ENCODE measurements at regions of chr22 and their contacts with region 1.

Region 1: GRCh38 chr22:39532215-39533071 is at the start of gene RPS19BP1:
- DNase-seq: peak; percentile 96
- H3K4me3 ChIP-seq: peak within 1 kb of the TSS; percentile 96
- CTCF ChIP-seq: no peak

Region 2: DNA sequence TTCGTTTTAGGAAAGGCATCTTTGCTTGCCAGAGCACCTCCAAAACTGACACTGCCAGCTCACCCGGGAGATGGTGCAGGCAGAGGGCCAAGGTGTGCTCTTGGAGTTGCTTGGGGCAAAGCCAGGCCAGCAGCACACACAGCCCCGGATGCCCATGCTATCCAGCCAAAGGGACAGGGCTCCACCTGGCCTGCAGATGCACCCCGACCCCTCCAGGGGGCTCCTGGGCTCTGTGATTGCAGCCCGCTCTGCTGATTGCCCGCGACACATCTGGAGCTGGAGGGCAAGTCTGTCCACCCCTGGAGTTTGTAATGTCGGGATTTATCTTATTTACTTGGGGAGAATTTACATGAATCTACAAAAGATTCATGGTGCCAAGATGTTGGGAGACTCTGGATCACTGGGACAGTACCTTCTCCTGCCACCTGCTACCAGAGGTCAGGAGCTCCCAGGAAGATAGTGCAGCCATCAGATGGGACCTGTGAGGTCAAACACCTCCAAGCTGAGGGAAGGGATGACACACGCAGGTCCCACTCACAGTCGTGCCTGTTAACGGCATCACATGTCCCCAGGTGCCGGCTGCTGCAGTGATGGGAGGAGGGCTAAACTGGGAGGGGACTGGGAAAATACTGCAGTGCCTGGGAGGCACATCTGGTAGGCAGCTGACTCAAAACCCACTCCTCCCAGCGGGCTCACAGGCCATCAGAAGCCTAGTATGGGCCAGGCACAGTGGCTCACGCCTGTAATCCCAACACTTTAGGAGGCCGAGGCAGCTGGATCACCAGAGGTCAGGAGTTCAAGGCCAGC is 397.1 kb before region 1 on chr22:
- CTCF ChIA-PET with region 1: interaction called, 10 read pairs
- POLR2A ChIA-PET with region 1: no interaction called
- DNase-seq: no peak
- H3K4me3 ChIP-seq: no peak overlapping the region
- CTCF ChIP-seq: peak; percentile 82

Region 3: DNA sequence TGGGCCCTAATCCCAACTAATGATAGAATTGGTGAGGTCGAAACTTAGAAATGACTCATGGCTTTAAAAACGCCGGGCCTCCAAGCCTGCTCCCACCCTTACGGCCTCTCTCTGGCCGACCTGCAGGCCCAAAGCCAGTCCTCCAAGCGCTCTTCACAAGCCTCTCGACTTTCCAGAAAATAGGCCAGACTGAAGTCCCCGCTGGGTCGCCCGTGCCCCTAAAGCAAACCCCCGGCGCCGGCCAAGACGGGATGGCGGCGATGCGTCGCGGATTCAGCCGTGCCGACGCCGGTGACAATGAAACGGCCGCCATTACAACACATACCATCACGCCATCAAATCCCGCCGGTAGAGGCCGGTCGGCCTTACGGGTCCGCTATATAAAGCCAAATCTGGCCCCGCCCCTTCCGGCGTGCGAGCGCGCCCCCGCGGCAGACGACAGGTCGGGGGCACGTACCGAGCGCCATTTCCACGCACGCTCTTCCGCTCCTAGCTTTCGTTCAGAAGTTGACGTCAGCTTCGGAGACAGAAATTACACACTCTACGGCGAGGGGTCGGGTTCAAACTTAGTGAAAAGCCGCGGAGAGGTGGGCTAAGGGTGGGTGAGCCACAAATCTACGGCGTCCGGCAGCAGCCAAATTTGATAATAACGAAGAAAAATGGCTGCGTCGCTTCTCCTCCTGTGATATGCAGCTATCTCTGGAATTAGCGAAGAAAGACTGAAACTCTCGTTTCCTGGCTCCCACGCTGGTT is 213.0 kb before region 1 on chr22 and contains the start of gene RPL3:
- CTCF ChIA-PET with region 1: interaction called, 84 read pairs
- POLR2A ChIA-PET with region 1: interaction called, 59 read pairs
- DNase-seq: peak; percentile 91
- H3K4me3 ChIP-seq: peak within 1 kb of the TSS; percentile 89
- CTCF ChIP-seq: no peak

Region 4: DNA sequence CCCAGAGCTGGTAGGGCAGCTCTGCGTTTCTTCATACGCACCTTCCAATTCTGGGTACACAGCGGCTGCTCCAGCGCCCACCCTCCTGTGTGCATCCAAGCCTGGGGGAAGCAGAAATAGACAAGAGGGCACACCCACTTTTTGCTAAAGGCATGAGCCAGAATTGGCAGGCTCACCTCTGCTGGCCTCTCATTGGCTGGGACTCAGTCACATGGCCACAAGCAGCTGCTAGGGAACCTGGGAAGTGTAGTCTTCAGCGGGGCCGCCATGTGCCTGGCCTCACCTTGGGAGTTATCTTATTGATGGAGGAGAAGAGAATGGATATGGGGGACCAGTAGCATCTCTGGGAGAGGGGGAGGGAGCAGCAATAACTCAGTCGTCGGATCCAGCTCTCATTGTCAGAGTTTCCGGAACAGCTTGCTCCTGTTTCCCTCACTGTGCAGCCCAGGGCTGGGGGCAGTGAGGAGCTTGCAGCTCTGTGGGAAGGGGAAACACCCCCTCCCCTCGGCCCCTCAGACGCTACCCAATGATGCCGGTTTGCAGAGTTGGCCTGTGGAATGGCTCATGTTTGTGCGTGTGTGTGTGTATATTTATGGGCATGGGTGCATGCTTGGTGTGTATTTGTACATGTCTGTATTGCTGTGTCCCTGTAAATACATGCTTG is 42.2 kb before region 1 on chr22:
- CTCF ChIA-PET with region 1: interaction called, 222 read pairs
- POLR2A ChIA-PET with region 1: no interaction called
- DNase-seq: no peak
- H3K4me3 ChIP-seq: no peak overlapping the region
- CTCF ChIP-seq: no peak

Region 5: DNA sequence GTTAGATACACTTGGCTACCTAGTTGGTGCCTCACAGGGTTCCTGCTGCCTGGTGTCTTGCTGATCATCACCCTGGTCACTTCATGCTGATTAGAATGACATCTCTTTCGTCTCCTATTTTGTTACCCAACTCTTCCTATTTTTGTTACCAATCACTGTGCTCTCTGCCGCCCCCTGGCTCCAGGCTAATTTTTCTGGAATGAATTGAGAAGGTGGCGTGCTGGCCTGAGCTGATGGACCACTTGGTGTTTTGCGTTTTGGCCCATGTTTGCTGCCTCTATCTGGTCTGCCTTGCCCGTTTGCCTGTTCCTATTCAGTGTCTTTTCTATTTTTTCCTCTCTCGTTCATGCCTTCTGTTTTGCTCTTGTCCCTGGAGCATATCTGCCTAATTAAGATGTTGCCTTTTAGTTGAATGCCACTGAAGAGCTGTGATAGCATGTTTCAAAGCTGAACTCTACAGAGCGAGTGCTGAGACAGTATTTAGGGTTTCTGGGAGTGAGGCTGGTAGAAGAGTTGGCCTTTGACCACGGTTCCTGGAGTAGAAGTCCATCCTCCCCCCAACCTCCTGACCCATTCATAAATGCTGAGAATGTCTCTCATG is 18.0 kb before region 1 on chr22:
- CTCF ChIA-PET with region 1: interaction called, 71 read pairs
- POLR2A ChIA-PET with region 1: interaction called, 17 read pairs
- DNase-seq: no peak
- H3K4me3 ChIP-seq: no peak overlapping the region
- CTCF ChIP-seq: peak; percentile 67

Region 6: DNA sequence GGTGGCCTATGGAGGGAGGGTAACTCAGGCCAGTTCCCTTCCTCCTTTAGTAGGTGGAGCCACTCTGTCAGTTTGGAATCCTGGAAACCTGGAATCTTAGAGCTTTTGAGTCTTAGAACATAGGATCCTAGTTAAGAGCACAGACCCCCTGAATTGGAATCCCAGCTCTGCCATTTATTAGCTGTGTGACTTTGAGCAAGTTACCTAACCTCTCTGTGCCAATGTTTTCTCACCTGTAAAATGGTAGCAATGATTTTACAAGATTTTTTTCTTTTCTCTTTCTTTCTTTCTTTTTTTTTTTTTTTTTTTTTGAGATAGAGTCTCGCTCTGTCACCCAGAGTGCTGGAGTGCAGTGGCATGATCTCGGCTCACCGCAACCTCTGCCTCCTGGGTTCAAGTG is 21.0 kb after region 1 on chr22:
- CTCF ChIA-PET with region 1: interaction called, 16 read pairs
- POLR2A ChIA-PET with region 1: interaction called, 3 read pairs
- DNase-seq: no peak
- H3K4me3 ChIP-seq: no peak overlapping the region
- CTCF ChIP-seq: no peak

Region 7: DNA sequence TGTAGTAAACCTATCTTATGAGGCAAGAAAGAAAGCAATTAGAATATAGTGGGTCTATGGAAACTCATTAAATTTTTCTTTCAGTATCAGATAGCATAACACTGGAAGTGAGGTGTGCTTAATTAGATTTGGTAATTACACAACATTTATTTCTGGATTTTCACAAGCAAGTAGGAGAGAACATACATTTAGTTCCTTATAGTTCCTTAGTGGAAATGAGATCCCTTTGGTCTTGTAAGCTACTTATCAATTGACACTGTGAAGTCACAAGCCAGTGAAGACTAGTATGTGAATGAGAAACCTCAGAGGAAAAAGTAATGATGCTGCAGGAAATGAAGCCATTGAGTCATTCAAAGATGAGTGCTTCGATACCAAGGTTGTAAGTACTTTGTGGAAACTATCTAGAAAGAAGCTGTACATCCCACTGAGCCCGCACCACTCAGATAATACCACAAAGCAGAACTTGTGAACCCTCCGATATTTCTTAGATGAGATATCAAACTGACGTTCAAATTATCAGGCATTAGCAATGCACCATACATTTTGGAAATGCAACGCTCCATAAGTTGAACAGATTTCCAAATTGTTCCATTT is 307.6 kb after region 1 on chr22:
- CTCF ChIA-PET with region 1: no interaction called
- POLR2A ChIA-PET with region 1: no interaction called
- DNase-seq: no peak
- H3K4me3 ChIP-seq: no peak overlapping the region
- CTCF ChIP-seq: no peak

Region 8: GRCh38 chr22:40044102-40044869 is 511.8 kb after region 1 on chr22:
- CTCF ChIA-PET with region 1: interaction called, 1,079 read pairs
- POLR2A ChIA-PET with region 1: interaction called, 4 read pairs
- DNase-seq: peak; percentile 96
- H3K4me3 ChIP-seq: peak overlapping the region; percentile 95
- CTCF ChIP-seq: no peak